Heart left ventricle (tissue), 16 donors: ENCODE measurements at regions of chr6 and their contacts with region 1.

Region 1: DNA sequence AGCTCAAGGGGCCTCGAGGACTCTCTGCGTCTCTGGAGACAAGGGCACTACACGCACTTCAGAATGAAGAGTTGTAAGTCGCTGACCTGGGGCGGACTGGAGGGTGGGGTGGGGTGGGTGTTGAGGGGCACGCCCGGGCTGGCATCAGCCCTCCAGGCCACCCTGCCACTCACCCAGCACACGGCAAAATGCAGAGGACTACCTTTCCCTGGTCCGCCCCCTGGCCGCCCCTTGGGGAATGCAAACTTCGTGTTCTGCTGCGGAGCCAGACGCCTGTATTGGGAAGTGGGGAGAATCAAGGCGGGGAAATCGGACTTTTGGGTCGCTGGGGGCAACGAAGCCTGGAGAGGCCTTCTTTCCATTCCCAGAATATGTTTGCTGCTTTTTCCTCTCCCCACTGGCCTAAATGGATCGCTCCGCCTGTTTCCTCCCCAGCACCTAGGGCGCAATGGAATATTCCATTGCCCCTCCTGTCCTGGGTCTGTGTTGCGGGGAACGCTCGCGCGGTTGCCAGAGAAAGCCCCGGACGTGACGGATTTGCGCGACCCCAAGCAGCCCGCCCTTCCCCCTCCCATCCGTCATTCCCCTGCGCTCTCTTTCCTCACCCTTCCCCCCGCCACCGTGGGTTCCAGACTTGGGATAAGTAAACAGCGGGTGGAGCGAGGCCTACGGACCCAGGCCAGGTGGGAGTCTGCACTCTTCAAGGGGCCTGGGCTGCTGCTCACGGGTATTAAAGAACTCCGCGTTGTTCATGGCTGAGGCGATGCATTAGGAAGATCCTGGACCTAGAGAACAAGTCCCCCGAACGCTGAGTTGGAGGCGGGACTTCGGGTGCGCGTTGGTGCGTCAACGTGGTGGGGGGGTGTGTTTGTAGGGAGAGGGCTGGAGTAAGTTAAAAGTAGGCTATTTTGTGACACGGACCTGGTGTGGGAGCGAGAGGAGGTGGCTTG is at the start of gene PPT2:
- DNase-seq: peak; percentile 92 to 96 (median 94)
- ATAC-seq: peak; percentile 89 to 94 (median 92)
- H3K4me3 ChIP-seq: peak within 1 kb of the TSS; percentile 47 to 91 (median 78)
- H3K27ac ChIP-seq: peak within 1 kb of the TSS; percentile 66 to 96 (median 91)
- H3K4me1 ChIP-seq: peaks cover 6 to 41% (median 21%) of the 10 kb centered on the region in 12 donors
- H3K27me3 ChIP-seq: peaks cover 0 to 37% (median 4%) of the 10 kb centered on the region in 9 donors
- CTCF ChIP-seq: peak in 5 of 12 donors; percentile 3 to 46 (median 18)
- POLR2A ChIP-seq: no peak
- total RNA-seq, gene PPT2: 17.1 to 34.0 (median 22.7) TPM

Region 2: DNA sequence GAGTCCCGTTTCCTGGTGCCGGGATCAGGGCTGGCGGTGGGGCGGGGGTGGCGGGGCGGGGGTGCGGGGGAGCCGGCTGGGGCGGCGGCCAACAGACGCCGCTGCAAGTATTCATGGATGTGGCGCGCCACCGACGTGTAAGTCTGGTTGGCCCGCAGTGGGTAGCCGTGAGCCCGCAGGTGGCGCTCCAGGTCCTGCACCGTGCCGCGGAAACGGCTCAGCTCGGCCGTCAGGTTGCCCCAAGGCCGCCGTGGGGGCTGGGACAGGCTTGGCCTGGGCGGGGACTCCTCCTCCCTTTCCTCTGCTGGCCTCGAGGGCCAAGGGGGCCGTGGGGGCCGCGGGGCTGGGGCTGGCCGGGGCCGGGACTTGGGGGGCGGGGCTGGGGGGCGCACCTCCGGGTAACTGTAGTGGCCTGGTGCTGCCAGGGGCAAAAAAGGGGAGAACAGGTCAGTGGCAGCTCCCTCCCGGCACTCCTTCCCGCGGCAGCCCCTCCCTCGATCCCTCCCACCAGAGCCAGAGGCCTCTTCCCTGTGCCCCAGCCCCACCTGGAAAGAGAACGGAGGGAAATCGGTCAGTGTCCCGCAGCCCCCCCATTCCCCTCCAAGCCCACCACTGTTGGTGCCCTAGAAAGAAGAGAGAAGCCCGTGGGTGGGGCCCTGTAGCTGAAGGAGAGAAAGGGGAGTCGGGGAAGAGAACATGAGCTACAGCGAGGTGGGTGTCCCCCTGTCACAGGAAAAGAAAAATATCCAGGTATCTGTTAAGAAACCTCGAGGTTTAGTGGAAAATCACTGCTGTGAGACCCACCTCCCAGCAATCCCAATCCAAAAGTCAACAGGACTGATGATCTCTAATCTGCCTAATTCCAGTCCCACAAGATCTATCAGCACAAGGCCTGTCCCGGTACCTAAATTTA is 66.0 kb before region 1 on chr6:
- intact Hi-C with region 1: loop called in 3 of 10 experiments (anchors 2 to 10 kb)
- DNase-seq: peak; percentile 87 to 89 (median 89)
- ATAC-seq: peak; percentile 75 to 88 (median 84)
- H3K4me3 ChIP-seq: peak overlapping the region in 7 of 12 donors; percentile 10 to 43 (median 31)
- H3K27ac ChIP-seq: peak overlapping the region; percentile 42 to 86 (median 79)
- H3K4me1 ChIP-seq: peaks cover 2 to 48% (median 23%) of the 10 kb centered on the region in 12 donors
- H3K27me3 ChIP-seq: peaks cover 0 to 17% (median 0%) of the 10 kb centered on the region in 9 donors
- CTCF ChIP-seq: peak; percentile 41 to 78 (median 62)
- POLR2A ChIP-seq: no peak

Region 3: GRCh38 chr6:32127717-32128592 is 25.9 kb before region 1 on chr6 and contains the start of gene ATF6B:
- intact Hi-C with region 1: loop called in 3 of 10 experiments (anchors 1 to 2 kb)
- DNase-seq: peak; percentile 98 to 100 (median 99)
- ATAC-seq: peak; percentile 93 to 97 (median 96)
- H3K4me3 ChIP-seq: peak within 1 kb of the TSS; percentile 61 to 100 (median 84)
- H3K27ac ChIP-seq: peak within 1 kb of the TSS in 11 of 12 donors; percentile 82 to 94 (median 89)
- H3K4me1 ChIP-seq: peaks cover 11 to 38% (median 25%) of the 10 kb centered on the region in 12 donors
- H3K27me3 ChIP-seq: no peaks in the 10 kb centered on the region
- CTCF ChIP-seq: no peak
- POLR2A ChIP-seq: peak in 1 of 2 donors; percentile 43
- total RNA-seq, gene ATF6B: 11.1 to 56.8 (median 28.7) TPM

Region 4: DNA sequence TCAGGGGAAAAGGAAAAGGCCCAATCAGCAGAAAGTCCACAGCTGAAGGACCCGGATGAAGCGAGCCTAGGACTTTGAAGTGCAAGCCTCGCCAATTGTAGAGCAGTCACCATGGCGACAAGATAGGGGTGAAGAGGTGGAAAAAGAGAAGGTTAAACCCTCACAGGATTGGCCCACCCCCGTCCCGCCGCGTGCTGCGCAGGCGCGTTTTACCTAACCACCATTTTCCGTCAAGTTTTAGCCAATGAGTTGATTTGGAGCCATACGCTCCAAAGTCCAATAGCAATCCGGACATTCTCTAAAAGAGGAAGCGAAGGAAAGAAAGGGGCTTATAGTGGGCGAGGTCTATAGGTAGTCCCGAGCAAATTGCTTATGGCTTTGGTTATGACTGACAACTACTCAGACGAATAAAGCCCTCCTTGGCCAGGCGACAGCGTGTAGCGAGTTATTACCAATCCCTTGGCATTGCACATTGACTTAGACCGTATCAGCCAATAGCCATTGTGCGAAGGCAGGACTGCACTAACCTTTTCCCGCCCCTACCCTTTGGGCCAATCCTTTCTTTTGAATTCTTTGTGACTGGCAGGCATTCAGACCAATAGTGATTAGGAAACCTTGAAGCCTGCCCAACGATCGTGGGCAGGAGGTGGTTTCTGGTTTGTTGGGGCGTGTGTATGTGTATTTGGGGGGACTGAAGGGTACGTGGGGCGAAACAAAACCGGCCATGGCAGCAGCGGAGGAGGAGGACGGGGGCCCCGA is 24.1 kb after region 1 on chr6 and contains the start of gene RNF5:
- intact Hi-C with region 1: loop called in 2 of 10 experiments (anchors 1 to 2 kb)
- DNase-seq: peak; percentile 92 to 98 (median 97)
- ATAC-seq: peak; percentile 82 to 89 (median 88)
- H3K4me3 ChIP-seq: peak within 1 kb of the TSS; percentile 47 to 99 (median 87)
- H3K27ac ChIP-seq: peak within 1 kb of the TSS; percentile 87 to 100 (median 97)
- H3K4me1 ChIP-seq: peaks cover 11 to 76% (median 52%) of the 10 kb centered on the region in 12 donors
- H3K27me3 ChIP-seq: no peaks in the 10 kb centered on the region
- CTCF ChIP-seq: no peak
- POLR2A ChIP-seq: peak in 1 of 2 donors; percentile 30
- total RNA-seq, gene RNF5: 62.7 to 136 (median 84.5) TPM

Region 5: DNA sequence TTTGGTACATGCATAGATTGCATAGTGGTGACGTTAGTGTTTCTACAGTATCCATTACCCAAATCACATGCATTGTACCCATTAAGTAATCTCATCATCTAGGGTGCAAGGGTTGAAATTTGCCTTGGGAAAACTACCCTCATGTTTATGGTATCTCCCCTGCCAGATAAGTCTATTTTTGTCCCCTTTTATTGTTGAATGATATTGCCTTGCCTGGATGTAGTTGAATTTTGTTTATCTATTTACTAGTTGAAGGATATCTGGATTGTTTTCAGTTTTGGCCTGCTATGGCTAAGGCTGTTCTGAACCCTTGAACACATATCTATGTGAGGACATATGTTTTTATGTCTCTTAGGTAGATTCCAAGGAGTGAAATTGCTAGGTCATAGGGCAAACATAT is 422.4 kb after region 1 on chr6:
- intact Hi-C with region 1: no loop called
- DNase-seq: no peak
- ATAC-seq: no peak
- H3K4me3 ChIP-seq: no peak overlapping the region
- H3K27ac ChIP-seq: no peak overlapping the region
- H3K4me1 ChIP-seq: no peaks in the 10 kb centered on the region
- H3K27me3 ChIP-seq: peaks cover 0 to 7% (median 0%) of the 10 kb centered on the region in 9 donors
- CTCF ChIP-seq: no peak
- POLR2A ChIP-seq: no peak